Mammary epithelial cell (primary cell): ENCODE measurements at regions of chr21 and their contacts with region 1.

Region 1: DNA sequence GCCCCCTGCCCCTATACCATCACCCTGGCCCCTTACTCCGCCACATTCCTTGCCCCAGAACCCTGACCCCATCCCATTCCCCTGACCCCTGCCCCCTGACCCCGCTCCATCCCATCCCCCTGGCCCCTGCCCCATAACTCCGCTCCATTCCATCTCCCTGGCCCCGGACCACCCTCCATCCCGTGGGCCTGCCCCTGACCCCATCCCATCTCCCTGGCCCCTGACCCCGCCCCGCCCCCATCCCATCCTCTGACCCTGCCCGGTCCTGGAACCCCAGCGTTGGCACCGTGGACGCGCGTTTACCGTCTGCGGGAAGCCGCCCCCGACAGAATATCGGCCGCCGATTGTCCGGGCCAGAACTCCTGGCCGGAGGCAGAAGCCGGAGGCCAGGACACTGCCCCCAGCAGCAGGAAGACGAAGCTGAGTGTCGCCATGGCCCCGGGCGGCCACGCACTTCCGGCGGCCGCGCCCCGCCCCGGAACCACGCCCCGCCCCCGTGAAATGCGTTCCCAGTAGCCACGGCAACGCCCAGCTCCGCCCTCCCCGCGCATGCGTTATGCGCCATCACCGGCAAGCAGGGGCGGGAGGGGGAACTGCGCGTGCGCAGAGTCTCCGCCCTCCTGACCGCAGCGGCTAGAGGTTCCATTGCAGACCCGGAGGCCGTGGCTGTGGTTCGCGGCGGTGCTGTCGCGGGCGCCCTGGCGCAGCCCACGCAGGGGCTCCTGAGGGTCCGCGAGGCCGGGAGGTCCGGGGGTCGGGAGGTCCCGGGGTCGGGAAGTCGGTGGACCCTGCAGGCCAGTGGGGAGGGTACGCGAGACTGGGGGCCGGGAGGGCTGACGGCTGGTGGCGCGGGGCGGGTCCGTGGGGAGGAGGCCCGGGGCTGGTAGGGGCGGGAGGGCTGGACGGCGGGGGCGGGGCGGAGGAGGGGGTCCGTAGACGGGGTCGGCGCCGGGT is at the start of gene POFUT2:
- DNase-seq: peak; percentile 91
- H3K4me3 ChIP-seq: peak within 1 kb of the TSS; percentile 72 to 90 (median 73)
- H3K27ac ChIP-seq: peak within 1 kb of the TSS; percentile 11
- H3K4me1 ChIP-seq: peaks cover 13% of the 10 kb centered on the region
- H3K27me3 ChIP-seq: no peaks in the 10 kb centered on the region
- CTCF ChIP-seq: no peak
- total RNA-seq, gene POFUT2: 19.3 to 25.0 TPM

Region 2: GRCh38 chr21:44792702-44793591 is 494.8 kb before region 1 on chr21:
- CTCF ChIA-PET with region 1: no interaction called
- dilution Hi-C with region 1: no loop called
- in situ Hi-C with region 1: no loop called
- intact Hi-C with region 1: no loop called
- DNase-seq: peak; percentile 51
- H3K4me3 ChIP-seq: no peak overlapping the region
- H3K27ac ChIP-seq: no peak overlapping the region
- H3K4me1 ChIP-seq: peaks cover 6% of the 10 kb centered on the region
- H3K27me3 ChIP-seq: no peaks in the 10 kb centered on the region
- CTCF ChIP-seq: peak; percentile 71 to 82

Region 3: GRCh38 chr21:44927587-44928461 is 359.9 kb before region 1 on chr21:
- CTCF ChIA-PET with region 1: interaction called, 37 read pairs
- dilution Hi-C with region 1: no loop called
- in situ Hi-C with region 1: no loop called
- intact Hi-C with region 1: no loop called
- DNase-seq: peak; percentile 89
- H3K4me3 ChIP-seq: peak overlapping the region in 1 of 3 experiments; percentile 33
- H3K27ac ChIP-seq: peak overlapping the region; percentile 91
- H3K4me1 ChIP-seq: peaks cover 52% of the 10 kb centered on the region
- H3K27me3 ChIP-seq: no peaks in the 10 kb centered on the region
- CTCF ChIP-seq: peak in 1 of 2 donors; percentile 37

Region 4: GRCh38 chr21:45179568-45180245 is 108.0 kb before region 1 on chr21:
- CTCF ChIA-PET with region 1: no interaction called
- dilution Hi-C with region 1: no loop called
- in situ Hi-C with region 1: no loop called
- intact Hi-C with region 1: no loop called
- DNase-seq: no peak
- H3K4me3 ChIP-seq: no peak overlapping the region
- H3K27ac ChIP-seq: no peak overlapping the region
- H3K4me1 ChIP-seq: no peaks in the 10 kb centered on the region
- H3K27me3 ChIP-seq: no peaks in the 10 kb centered on the region
- CTCF ChIP-seq: no peak

Region 5: DNA sequence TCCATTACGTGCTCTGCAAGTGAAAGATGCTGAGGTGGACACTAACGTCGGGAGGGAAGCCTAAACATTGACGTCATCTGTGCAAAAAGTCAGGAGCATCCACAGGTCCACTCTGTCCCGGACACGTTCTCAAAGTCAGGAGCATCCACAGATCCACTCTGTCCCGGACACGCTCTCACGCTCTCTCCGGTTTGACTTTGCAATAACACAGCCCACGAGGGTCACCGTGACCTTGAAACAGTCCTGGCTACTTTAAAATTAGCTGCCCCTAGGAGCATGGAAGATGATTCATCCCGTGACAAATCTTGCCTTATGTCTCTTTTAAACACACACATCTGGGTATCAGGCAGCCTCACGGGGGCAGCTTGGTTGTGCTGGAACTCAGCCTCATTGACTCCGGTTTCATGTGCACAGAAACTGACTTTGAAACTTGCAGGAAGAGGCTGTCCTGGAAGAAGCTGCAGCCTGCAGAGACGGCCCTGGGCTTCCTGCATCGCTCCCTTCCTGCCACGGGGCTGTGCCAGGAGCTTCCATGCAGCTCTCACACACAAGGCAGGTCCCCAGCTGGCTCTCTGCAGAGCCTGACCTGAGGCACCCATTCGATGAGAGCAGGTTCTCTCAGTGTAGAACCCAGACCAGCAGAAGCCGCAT is 99.1 kb after region 1 on chr21:
- CTCF ChIA-PET with region 1: interaction called, 4 read pairs
- dilution Hi-C with region 1: no loop called
- in situ Hi-C with region 1: no loop called
- intact Hi-C with region 1: loop called (anchors 10 kb)
- DNase-seq: peak; percentile 56
- H3K4me3 ChIP-seq: no peak overlapping the region
- H3K27ac ChIP-seq: no peak overlapping the region
- H3K4me1 ChIP-seq: peaks cover 6% of the 10 kb centered on the region
- H3K27me3 ChIP-seq: no peaks in the 10 kb centered on the region
- CTCF ChIP-seq: peak in 1 of 2 donors; percentile 30

Region 6: DNA sequence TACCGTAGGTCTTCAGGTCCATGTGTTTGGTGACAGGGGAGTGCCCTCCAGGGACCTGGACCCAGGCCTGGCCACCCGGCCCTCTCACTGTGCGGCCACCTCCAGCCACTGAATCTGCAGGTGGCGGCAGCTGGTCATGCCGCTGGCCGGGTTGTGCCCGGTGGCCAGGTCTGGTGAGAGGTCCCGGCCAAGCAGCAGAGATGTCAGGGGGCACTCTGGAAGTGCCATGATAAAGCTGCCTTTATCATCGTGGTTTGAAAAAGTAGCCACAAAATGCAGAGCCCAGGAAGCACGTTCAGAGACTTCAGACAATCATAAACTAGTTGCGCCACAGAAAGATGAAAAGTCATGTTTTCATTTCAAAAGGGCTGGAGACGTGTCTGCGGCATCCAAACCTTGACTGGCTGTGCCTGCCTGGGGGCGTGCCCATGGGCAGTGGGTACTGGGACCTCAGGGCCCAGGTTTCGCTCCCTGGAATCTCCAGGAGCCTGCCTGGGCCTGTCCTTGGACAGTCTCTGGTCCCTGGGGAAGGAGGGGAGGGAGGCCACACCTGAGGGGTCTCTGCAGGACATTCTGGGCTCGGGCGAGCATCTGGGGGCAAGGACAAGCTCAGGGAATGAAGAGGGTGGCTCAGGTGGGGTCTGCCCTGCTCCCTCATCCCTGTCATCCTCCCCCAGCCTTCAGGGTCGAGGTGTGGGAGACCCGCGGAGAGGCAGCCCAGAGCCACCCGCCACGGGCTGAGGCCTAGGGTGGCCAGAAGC is 162.1 kb after region 1 on chr21:
- CTCF ChIA-PET with region 1: interaction called, 16 read pairs
- dilution Hi-C with region 1: no loop called
- in situ Hi-C with region 1: loop called in 1 of 2 experiments (anchors 10 kb)
- intact Hi-C with region 1: no loop called
- DNase-seq: peak; percentile 31
- H3K4me3 ChIP-seq: no peak overlapping the region
- H3K27ac ChIP-seq: no peak overlapping the region
- H3K4me1 ChIP-seq: peaks cover 50% of the 10 kb centered on the region
- H3K27me3 ChIP-seq: no peaks in the 10 kb centered on the region
- CTCF ChIP-seq: no peak

Region 7: GRCh38 chr21:45596704-45597318 is 309.1 kb after region 1 on chr21:
- CTCF ChIA-PET with region 1: no interaction called
- dilution Hi-C with region 1: no loop called
- in situ Hi-C with region 1: no loop called
- intact Hi-C with region 1: loop called (anchors 1 kb)
- DNase-seq: peak; percentile 21
- H3K4me3 ChIP-seq: no peak overlapping the region
- H3K27ac ChIP-seq: no peak overlapping the region
- H3K4me1 ChIP-seq: no peaks in the 10 kb centered on the region
- H3K27me3 ChIP-seq: no peaks in the 10 kb centered on the region
- CTCF ChIP-seq: peak; percentile 82 to 93

Region 8: GRCh38 chr21:46368533-46369285 is 1081.0 kb after region 1 on chr21:
- CTCF ChIA-PET with region 1: interaction called, 13 read pairs
- dilution Hi-C with region 1: no loop called
- in situ Hi-C with region 1: no loop called
- intact Hi-C with region 1: no loop called
- DNase-seq: no peak
- H3K4me3 ChIP-seq: no peak overlapping the region
- H3K27ac ChIP-seq: no peak overlapping the region
- H3K4me1 ChIP-seq: no peaks in the 10 kb centered on the region
- H3K27me3 ChIP-seq: no peaks in the 10 kb centered on the region
- CTCF ChIP-seq: no peak